MCF 10A (cell line): ENCODE measurements at regions of chr3 and their contacts with region 1.

Region 1: GRCh38 chr3:86793786-86794185 is 197.2 kb downstream of the VGLL3 start:
- DNase-seq: peak; percentile 75
- H3K4me3 Mint-ChIP-seq: peak overlapping the region; percentile 49
- H3K27ac Mint-ChIP-seq: peak overlapping the region; percentile 98
- H3K4me1 Mint-ChIP-seq: peaks cover 22% of the 10 kb centered on the region
- H3K27me3 Mint-ChIP-seq: no peaks in the 10 kb centered on the region
- CTCF ChIP-seq: no peak

Region 2: GRCh38 chr3:86923071-86923491 is 129.3 kb after region 1 on chr3:
- CTCF ChIA-PET with region 1: interaction called, 3 read pairs
- POLR2A ChIA-PET with region 1: no interaction called
- intact Hi-C with region 1: loop called (anchors 2 kb)
- DNase-seq: peak; percentile 95
- H3K4me3 Mint-ChIP-seq: peak overlapping the region; percentile 62
- H3K27ac Mint-ChIP-seq: peak overlapping the region; percentile 97
- H3K4me1 Mint-ChIP-seq: peaks cover 28% of the 10 kb centered on the region
- H3K27me3 Mint-ChIP-seq: no peaks in the 10 kb centered on the region
- CTCF ChIP-seq: no peak